MCF 10A (cell line): ENCODE measurements at regions of chr15 and their contacts with region 1.

Region 1: DNA sequence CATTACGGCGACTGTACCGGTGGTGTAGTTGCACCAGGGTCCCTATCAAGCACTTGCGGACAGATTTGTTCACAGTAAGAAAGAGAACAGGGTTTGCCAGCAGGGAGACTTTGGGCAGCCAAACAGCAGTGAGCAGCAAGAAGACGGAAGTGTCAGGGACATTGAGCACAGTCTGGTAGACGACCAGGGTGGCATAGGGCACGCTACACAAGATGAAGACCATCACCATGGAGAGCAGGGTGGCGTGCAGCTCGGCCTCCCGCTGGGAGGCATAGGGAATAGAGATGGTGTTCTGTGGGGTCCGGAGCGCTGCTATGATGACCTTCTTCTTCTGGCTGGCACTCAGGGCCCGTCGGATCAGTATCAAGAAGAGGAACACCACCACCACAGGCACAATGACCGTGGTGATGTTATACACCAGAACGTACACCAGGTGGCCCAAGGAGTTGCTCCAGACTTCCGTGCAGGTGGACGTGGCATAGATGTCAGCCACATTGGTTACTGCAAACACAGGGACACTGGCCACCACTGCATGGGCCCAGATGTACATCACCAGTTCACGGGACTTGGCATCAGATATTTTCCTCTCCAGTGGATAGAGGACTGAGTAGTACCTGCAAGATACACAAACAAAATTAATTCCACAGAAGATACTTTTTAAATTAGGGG is 19.1 kb upstream of the FSIP1 start:
- DNase-seq: peak; percentile 51
- H3K4me3 Mint-ChIP-seq: no peak overlapping the region
- H3K27ac Mint-ChIP-seq: no peak overlapping the region
- H3K4me1 Mint-ChIP-seq: peaks cover 9% of the 10 kb centered on the region
- H3K27me3 Mint-ChIP-seq: no peaks in the 10 kb centered on the region
- CTCF ChIP-seq: peak; percentile 30

Region 2: DNA sequence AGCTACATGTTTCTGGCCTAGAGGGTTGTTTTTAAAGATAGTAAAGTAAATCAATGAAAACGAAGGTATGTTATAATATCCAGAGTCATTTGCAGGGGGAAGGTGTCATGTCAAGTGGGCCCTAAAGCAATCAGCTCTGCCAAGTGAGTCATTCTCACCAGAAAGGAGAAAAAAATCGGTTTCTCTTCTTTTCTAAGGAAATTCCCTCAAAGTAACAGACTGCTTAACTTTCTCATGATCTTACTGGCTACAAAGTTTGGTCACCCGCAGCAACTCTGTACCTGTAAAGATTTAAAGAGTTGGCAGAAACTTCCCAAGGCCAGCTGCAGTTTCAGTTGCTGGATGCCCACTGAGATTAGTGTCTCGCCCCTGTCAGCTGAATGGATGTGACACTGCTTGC is 13.7 kb before region 1 on chr15:
- CTCF ChIA-PET with region 1: interaction called, 14 read pairs
- POLR2A ChIA-PET with region 1: interaction called, 6 read pairs
- intact Hi-C with region 1: no loop called
- DNase-seq: peak; percentile 8
- H3K4me3 Mint-ChIP-seq: no peak overlapping the region
- H3K27ac Mint-ChIP-seq: no peak overlapping the region
- H3K4me1 Mint-ChIP-seq: peaks cover 15% of the 10 kb centered on the region
- H3K27me3 Mint-ChIP-seq: no peaks in the 10 kb centered on the region
- CTCF ChIP-seq: no peak

Region 3: DNA sequence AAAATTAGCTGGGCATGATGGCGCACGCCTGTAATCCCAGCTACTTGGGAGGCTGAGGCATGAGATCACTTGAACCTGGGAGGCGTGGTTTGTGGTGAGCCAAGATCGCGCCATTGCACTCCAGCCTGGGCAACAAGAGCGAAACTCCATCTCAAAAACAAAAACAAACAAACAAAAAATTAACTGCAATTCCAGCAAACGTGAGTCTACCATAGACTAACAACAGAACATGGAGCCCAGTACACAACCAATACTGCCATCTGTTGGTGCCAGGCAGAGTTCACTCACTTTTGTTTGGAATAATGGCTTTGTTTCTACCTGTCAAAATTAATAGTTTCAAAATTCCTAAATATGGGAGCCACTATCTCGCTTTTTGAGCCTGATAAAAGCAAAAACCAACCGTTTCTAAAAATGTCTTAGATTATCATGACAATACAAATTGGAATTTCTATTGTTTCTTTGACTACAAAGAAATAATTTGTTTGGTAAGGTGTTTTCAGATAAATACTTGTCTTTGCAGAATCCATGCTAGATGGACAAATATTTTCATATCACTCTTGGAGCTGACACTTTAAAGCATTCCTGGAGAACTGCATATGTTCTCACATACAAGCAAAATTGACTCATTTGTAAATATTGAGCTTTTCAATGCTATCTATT is 73.2 kb after region 1 on chr15:
- CTCF ChIA-PET with region 1: interaction called, 8 read pairs
- POLR2A ChIA-PET with region 1: interaction called, 8 read pairs
- intact Hi-C with region 1: loop called (anchors 1 kb)
- DNase-seq: peak; percentile 62
- H3K4me3 Mint-ChIP-seq: no peak overlapping the region
- H3K27ac Mint-ChIP-seq: no peak overlapping the region
- H3K4me1 Mint-ChIP-seq: no peaks in the 10 kb centered on the region
- H3K27me3 Mint-ChIP-seq: no peaks in the 10 kb centered on the region
- CTCF ChIP-seq: peak; percentile 68

Region 4: DNA sequence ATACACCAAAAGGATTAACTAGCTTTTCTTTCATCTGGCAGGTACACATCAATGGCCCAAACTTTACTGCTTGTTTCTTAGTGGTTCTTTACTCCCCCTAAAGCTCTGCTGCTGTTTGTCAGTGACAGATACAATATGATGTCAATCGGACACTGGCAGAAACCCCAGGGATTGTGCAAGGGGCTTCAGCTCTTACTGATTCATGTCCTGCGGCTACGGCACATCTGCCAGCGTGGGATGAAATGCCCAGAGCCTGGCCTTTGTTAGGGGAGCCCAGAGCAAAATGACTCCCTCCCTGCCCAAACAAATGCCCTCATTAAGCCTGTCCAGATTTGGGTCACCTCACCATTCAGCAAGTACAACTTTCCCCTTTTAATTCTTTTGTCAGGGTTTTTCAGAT is 208.9 kb after region 1 on chr15:
- CTCF ChIA-PET with region 1: no interaction called
- POLR2A ChIA-PET with region 1: no interaction called
- intact Hi-C with region 1: no loop called
- DNase-seq: peak; percentile 73
- H3K4me3 Mint-ChIP-seq: no peak overlapping the region
- H3K27ac Mint-ChIP-seq: no peak overlapping the region
- H3K4me1 Mint-ChIP-seq: peaks cover 1% of the 10 kb centered on the region
- H3K27me3 Mint-ChIP-seq: no peaks in the 10 kb centered on the region
- CTCF ChIP-seq: no peak